Activated CD8-positive, alpha-beta memory T cell treated with anti-CD3 and anti-CD28 coated beads, Interleukin-2, amount 10 ng/mL, durations not matched to agents 7 days and 5 days (primary cell): ENCODE measurements at regions of chr17 and their contacts with region 1.

Region 1: DNA sequence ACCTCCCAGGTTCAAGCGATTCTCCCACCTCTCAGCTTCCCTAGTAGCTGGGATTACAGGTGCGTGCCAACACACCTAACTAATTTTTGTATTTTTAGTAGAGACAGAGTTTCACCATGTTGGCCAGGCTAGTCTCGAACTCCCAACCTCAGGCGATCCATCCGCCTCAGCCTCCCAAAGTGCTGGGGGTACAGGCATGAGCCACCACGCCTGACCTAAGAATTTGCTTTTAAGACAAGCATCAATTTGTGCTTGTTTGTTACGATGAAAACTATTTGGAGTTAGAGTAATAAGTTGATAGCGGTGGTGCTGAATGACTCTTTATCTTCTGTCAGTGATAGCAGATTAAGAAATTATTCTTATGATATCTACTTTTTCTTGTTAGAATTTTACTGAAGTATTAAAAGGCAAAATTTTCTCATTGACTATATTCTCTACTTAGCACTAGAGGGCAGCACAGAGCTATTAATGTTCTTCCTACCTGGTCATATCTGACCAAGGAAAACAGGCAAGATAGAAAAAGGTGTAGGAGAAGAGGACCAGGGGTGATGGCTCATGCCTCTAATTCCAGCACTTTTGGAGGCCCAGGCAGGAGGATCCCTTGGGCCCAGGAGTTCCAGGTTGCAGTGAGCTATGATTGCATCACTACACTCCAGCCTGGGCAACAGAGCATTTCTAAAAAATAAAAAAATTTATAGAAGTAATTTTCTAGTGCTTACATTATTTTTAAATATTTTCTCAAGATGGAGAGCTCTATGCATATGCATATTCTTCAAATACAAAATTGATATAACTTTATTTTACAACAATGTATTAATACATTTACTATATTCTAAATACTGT is 24.5 kb downstream of the STXBP4 start:
- DNase-seq: no peak
- ATAC-seq: peak; percentile 51
- H3K4me3 Mint-ChIP-seq: no peak overlapping the region
- H3K27ac Mint-ChIP-seq: no peak overlapping the region
- H3K4me1 Mint-ChIP-seq: no peaks in the 10 kb centered on the region
- H3K27me3 Mint-ChIP-seq: no peaks in the 10 kb centered on the region

Region 2: DNA sequence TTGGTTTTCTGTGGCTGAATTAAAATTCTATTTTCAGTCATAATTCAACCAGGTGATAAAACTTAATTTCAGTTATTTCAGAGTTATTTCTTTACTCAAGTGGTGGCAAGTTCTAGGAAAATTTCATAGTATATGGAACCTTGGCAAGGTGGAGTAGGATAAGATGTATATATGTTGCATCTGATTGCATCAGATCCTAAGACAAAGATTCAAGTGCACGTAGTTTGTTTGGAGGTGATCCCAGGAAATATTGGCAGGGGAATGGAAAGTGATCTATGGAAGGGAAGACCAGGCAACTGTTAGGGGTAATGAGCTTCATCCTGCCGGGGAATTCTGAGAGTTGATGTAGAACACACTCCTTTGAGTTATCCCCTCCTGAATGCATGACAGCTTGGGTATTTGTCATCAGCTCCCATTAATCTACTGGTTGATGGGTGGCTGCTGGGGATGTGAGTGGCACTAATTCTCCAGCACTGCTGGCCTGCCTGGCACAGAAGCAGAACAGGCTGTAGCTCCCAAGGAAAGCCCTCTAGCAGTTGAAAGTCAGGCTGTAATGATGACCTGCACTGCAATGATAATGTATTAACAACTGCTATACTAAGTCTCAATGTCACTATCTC is 144.5 kb before region 1 on chr17:
- CTCF ChIA-PET with region 1: no interaction called
- DNase-seq: no peak
- ATAC-seq: no peak
- H3K4me3 Mint-ChIP-seq: no peak overlapping the region
- H3K27ac Mint-ChIP-seq: no peak overlapping the region
- H3K4me1 Mint-ChIP-seq: no peaks in the 10 kb centered on the region
- H3K27me3 Mint-ChIP-seq: no peaks in the 10 kb centered on the region

Region 3: DNA sequence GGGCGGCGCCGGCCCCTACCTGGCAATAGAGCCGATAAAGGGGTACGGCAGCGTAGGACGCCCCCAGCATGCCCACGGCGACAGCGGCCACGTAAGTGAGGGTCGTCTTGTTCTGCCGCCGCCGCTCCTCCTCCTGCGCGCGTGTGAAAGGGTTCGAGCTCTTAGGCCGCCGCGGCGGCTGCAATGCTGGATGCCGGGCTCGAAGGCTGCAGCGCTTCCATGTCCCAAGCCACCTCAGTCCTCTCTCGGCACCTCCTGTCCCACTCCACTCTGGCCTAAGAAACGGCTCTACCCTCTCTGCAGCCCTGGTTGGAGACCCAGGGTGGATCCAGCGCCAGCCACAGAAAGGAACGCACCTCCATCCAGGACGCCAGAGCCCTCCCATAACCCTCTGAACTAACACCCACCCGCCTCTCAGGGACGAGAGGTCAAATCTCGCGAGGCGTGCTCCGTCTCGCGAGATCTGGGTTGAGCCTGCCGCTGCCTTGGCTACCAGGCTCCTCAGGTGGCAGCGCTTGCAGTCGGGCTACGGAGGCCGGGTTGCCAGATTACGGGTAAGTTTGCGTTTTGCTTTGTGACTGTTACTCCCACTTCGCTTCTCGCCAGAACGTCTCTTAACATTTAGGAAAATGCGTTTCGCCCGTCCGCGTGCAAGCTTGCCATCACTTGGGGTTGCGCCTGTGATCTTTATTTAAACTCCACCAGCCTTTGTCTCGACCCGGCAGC is 24.6 kb before region 1 on chr17 and contains the starts of genes COX11 and STXBP4:
- CTCF ChIA-PET with region 1: interaction called, 13 read pairs
- DNase-seq: peak; percentile 97
- ATAC-seq: peak; percentile 97
- H3K4me3 Mint-ChIP-seq: no peak within 1 kb of the TSS
- H3K27ac Mint-ChIP-seq: no peak within 1 kb of the TSS
- H3K4me1 Mint-ChIP-seq: peaks cover 23% of the 10 kb centered on the region
- H3K27me3 Mint-ChIP-seq: no peaks in the 10 kb centered on the region
- total RNA-seq, gene COX11: 40.5 to 61.1 TPM
- total RNA-seq, gene STXBP4: 8.2 to 9.4 TPM

Region 4: GRCh38 chr17:54982399-54982798 is 10.6 kb before region 1 on chr17:
- CTCF ChIA-PET with region 1: no interaction called
- DNase-seq: no peak
- ATAC-seq: no peak
- H3K4me3 Mint-ChIP-seq: no peak overlapping the region
- H3K27ac Mint-ChIP-seq: no peak overlapping the region
- H3K4me1 Mint-ChIP-seq: peaks cover 4% of the 10 kb centered on the region
- H3K27me3 Mint-ChIP-seq: no peaks in the 10 kb centered on the region

Region 5: GRCh38 chr17:55005520-55005919 is 12.5 kb after region 1 on chr17:
- CTCF ChIA-PET with region 1: interaction called, 19 read pairs
- DNase-seq: no peak
- ATAC-seq: no peak
- H3K4me3 Mint-ChIP-seq: no peak overlapping the region
- H3K27ac Mint-ChIP-seq: no peak overlapping the region
- H3K4me1 Mint-ChIP-seq: peaks cover 2% of the 10 kb centered on the region
- H3K27me3 Mint-ChIP-seq: no peaks in the 10 kb centered on the region

Region 6: DNA sequence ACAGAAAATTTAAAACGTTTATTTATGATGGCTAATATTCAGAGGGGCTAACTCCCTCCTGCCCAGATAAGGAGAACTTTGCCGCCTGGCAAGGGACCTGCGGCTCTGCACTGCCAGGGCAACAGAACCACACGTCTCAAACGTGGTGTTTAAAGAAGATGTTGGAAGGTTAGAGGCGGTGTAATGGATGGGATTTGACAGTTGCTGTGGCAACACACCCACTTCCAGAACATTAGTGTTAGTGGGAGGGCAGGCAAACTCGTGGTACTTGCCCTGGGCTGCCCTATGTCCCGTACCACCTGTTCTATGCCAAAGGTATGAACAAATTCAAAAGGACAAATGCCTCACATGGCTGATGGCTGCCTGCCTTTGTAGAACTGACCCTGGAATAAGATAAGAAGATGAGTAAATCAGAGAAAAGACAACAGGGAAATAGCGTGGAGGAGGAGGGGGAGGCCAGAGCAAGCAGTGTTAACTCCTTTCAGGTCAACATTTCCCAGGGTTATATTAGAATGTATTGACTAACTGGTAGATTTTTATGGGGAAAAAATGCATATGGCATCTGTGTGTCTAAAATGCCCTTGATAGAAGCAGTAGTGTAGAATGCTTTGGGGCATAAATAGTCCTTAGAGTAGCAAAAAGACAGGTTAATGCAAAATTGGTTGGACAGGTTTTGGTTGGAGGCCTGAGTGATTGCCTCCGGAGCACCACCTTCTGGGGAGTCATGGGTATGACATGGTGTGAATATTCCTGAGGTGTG is 302.6 kb after region 1 on chr17:
- CTCF ChIA-PET with region 1: interaction called, 16 read pairs
- DNase-seq: peak; percentile 63
- ATAC-seq: peak; percentile 83
- H3K4me3 Mint-ChIP-seq: no peak overlapping the region
- H3K27ac Mint-ChIP-seq: no peak overlapping the region
- H3K4me1 Mint-ChIP-seq: peaks cover 3% of the 10 kb centered on the region
- H3K27me3 Mint-ChIP-seq: peaks cover 9% of the 10 kb centered on the region

Region 7: DNA sequence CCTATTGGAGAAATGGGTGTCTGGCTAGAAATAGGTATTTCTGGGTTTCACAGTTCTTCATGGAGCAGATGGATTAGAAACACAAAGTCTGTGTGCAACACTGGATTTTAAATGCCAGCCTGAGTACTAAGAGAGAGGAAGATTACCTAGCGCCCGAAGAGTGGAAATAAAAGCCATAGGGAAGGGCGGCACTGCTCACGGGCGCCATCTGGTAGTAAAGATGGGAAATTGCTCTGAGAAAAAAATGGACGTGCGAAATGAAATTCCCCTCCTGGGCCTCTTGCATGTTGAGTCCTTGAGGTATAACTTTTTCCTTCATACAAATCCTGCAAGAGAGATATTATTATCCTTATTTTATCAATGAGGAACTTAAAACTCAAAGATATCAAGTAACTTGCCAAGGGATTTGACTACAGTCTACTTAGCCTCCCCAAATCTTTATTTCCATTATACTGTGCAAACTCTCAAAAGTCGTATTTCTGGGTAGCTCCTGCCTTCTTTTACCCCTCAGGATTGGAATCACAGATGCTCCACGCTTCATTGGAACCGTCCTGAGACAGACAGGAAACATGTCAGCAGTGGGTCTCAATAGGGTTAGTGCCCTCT is 355.8 kb after region 1 on chr17:
- CTCF ChIA-PET with region 1: interaction called, 62 read pairs
- DNase-seq: peak; percentile 54
- ATAC-seq: no peak
- H3K4me3 Mint-ChIP-seq: no peak overlapping the region
- H3K27ac Mint-ChIP-seq: no peak overlapping the region
- H3K4me1 Mint-ChIP-seq: peaks cover 52% of the 10 kb centered on the region
- H3K27me3 Mint-ChIP-seq: no peaks in the 10 kb centered on the region

Region 8: DNA sequence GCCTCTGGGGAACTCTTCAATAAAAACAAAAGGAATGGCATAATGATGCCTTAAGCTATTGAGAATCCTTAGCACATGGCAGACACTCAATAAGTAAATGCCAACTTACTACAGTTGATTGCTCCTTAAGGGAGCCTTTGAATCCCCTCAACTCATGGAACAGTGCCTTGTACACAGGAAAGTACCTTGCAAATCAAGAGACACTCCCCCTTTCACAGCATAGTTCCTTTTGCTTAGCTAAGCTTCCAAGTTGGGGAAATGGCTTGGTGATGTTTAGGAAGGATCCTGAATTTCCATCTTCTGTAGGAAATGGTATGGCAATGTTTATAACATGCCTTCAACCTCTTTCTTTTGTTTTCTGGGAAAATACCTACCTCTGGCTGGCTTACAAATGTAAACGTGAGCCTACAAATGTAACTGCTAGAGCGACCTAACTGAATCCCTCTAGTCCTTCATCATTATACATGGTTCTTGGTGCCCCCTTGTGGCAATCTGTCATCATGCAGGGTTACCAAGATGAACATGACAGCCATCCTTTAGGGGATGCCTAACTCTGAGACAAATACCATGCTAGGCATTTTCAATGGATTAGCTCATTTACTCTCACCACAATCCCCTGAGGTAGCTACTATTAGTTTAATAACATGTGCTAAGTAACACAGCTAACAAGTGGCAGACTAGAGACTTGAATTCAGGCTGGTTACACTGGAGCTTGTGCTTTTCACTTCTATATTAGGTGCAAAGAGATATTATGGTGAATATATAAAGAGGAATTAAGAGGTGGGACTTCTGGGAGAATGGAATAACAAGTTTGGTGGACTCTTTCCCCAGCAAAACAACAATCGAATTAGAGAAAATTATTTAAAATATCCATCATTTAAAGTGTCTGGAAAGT is 363.7 kb after region 1 on chr17:
- CTCF ChIA-PET with region 1: interaction called, 62 read pairs
- DNase-seq: peak; percentile 84
- ATAC-seq: peak; percentile 92
- H3K4me3 Mint-ChIP-seq: no peak overlapping the region
- H3K27ac Mint-ChIP-seq: no peak overlapping the region
- H3K4me1 Mint-ChIP-seq: peaks cover 4% of the 10 kb centered on the region
- H3K27me3 Mint-ChIP-seq: peaks cover 20% of the 10 kb centered on the region